ENCODE measurements at regions of chr7 and their contacts with region 1.

Region 1: DNA sequence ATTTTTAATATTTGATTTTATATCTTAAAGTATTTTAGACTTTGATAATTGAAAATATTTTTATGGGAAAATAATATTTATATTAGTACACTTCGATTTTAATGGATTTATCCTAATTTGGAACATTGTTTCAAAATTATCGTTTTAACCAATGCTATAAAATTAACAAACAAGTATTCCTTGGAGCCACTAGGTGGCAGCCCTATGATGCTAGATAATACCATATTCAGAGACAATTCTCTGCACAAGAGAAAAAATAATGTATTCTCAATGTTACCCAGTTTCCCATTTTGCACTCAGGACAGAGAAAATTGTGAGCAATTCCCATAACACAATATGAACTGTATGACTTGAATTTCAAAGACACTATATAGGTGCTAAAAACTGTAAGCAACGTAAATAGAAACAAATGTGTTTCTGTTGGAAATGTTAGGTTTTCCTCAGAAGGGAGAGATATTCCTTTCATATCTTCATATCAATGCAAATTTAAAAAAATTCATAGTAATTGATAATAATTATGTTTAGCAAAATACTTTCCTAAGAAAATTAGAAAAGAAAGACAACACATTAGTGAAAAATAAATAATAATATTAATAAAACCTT is 237.8 kb downstream of the SEMA3E start:
- DNase-seq: no peak
- ATAC-seq: no peak
- H3K4me3 ChIP-seq: no peak overlapping the region
- H3K27ac ChIP-seq: no peak overlapping the region
- H3K4me1 ChIP-seq: no peaks in the 10 kb centered on the region
- H3K27me3 ChIP-seq: no peaks in the 10 kb centered on the region
- CTCF ChIP-seq: peak; percentile 49

Region 2: DNA sequence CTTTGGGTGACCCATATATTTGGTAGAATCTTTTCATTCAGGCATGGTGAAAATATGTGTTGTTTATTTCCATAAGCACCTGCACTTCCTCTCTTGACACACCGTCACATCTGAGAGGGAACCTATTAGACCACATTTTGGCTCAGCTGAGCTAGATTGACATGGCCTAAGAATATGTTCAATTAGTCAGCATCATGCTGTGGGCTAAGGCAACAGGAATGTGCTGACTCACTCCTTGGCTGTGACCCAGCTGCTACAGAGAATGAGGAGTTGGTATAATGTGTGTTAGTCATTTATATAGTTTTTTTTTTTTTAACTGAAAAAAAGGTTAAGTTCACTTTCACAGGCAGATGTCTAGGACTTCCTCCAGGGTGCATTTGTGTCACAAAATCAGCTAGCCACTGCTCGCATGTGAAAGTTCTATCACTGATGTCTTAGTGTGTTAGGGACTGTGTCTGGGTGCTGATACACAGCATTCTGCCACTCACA is 57.2 kb after region 1 on chr7:
- intact Hi-C with region 1: no loop called
- DNase-seq: peak; percentile 59 to 65
- ATAC-seq: peak in 3 of 4 donors; percentile 65 to 77 (median 65)
- H3K4me3 ChIP-seq: no peak overlapping the region
- H3K27ac ChIP-seq: no peak overlapping the region
- H3K4me1 ChIP-seq: no peaks in the 10 kb centered on the region
- H3K27me3 ChIP-seq: no peaks in the 10 kb centered on the region
- CTCF ChIP-seq: no peak

Region 3: GRCh38 chr7:83655951-83656556 is 245.0 kb after region 1 on chr7:
- intact Hi-C with region 1: loop called (anchors 10 kb)
- DNase-seq: no peak
- ATAC-seq: no peak
- H3K4me3 ChIP-seq: no peak overlapping the region
- H3K27ac ChIP-seq: no peak overlapping the region
- H3K4me1 ChIP-seq: no peaks in the 10 kb centered on the region
- H3K27me3 ChIP-seq: no peaks in the 10 kb centered on the region
- CTCF ChIP-seq: peak; percentile 50

Region 4: DNA sequence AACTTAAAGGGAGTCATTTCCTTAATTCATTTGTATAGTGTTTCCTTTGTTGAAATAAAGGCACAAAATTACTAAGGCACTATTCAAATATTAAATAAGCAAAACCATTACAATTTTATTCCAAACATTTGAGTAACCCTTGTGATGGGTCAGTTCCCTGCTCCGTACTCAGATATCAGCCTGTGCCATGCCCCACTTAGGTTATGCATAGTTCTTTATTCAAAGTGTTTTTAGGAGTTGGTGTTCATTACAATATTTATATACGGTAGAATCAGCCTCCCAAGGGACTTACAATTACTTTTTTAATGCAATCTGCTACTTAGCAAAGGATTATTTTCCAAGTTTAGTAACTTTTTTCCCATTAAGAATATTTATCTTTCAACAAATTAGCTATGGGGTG is 1895.0 kb after region 1 on chr7:
- intact Hi-C with region 1: loop called in 1 of 2 experiments (anchors 10 kb)
- DNase-seq: no peak
- ATAC-seq: no peak
- H3K4me3 ChIP-seq: no peak overlapping the region
- H3K27ac ChIP-seq: no peak overlapping the region
- H3K4me1 ChIP-seq: no peaks in the 10 kb centered on the region
- H3K27me3 ChIP-seq: no peaks in the 10 kb centered on the region
- CTCF ChIP-seq: no peak

Measured in psoas muscle (tissue), 8 donors.